Body of pancreas (tissue), 4 donors: ENCODE measurements at regions of chr3 and their contacts with region 1.

Region 1: DNA sequence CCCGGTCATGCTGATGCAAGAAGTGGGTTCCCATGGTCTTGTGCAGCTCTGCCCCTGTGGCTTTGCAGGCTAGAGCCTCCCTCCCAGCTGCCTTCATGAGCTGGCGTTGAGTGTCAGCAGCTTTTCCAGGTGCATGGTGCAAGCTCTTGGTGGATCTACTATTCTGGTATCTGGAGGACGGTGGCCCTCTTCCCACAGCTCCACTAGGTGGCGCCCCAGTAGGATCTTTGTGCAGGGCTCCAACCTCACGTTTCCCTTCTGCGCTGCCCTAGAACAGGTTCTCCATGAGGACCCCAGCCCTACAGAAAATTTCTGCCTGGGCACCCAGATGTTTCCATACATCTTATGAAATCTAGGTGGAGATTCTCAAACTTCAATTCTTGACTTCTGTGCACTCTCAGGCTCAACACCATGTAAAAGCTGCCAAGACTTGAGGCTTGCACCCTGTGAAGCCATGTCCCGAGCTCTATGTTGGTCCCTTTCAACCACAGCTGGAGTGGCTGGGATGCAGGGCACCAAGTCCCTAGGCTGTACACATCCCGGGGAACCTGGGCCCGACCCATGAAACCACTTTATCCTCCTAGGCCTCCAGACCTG is 238.4 kb upstream of the MDFIC2 start:
- DNase-seq: peak; percentile 73 to 81 (median 76)
- ATAC-seq: peak; percentile 79
- H3K4me3 ChIP-seq: no peak overlapping the region
- H3K27ac ChIP-seq: no peak overlapping the region
- H3K4me1 ChIP-seq: no peaks in the 10 kb centered on the region
- H3K27me3 ChIP-seq: no peaks in the 10 kb centered on the region
- CTCF ChIP-seq: peak; percentile 67 to 75 (median 71)
- POLR2A ChIP-seq: no peak

Region 2: GRCh38 chr3:71641674-71642073 is 1090.9 kb after region 1 on chr3:
- intact Hi-C with region 1: loop called (anchors 10 kb)
- DNase-seq: no peak
- ATAC-seq: no peak
- H3K4me3 ChIP-seq: no peak overlapping the region
- H3K27ac ChIP-seq: no peak overlapping the region
- H3K4me1 ChIP-seq: no peaks in the 10 kb centered on the region
- H3K27me3 ChIP-seq: no peaks in the 10 kb centered on the region
- CTCF ChIP-seq: no peak
- POLR2A ChIP-seq: no peak